Head of caudate nucleus (tissue), 42 donors: ENCODE measurements at regions of chr17 and their contacts with region 1.

Region 1: GRCh38 chr17:36545465-36546417 is 1.0 kb downstream of the GGNBP2 start:
- DNase-seq: peak; percentile 91 to 99 (median 98)

Region 2: DNA sequence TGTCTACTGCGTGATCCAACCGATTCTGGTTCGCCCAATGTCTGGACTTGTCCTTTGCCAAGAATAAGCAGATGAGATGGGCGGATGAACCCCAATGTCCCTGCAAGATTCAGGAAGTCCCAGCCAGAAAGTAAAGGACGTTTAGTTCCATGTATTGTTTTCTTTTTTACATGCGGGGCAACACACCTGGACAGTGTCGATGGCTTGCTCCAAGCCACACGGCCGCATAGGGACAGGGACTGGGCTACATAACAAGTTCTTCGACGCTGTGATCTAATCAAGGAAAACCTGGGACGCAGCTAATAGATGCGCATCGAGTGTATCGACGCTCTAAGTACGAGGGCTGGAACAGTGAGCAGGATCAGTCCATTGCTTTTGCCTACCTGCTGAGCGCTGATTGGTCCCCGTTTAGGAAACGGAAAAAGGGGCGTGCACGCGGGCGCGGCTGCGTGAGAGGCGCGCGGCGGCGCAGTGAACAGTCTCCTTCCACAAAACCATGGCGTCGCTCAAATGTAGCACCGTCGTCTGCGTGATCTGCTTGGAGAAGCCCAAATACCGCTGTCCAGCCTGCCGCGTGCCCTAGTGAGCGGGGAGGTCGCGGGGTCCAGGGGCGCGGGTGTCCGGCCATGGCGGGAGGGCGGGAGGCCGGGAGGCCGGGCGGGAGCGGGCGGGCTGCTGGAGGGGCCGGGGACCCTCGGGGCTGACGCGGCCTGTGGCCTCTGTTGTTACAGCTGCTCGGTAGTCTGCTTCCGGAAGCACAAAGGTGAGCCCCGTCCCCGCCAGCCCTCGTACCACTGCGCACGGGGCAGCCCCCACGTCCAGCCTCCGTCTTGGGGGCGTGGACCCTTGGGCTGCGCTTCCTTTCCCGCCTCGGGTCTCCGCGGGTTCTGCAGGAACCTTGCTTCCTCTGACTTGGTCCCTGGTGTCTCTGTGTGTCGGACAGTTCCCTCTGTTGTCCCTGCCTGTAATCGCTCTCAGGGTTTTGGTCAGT is 59.2 kb before region 1 on chr17 and contains the start of gene ZNHIT3:
- intact Hi-C with region 1: loop called (anchors 10 kb)
- DNase-seq: peak; percentile 88 to 97 (median 94)